IMR-90 (cell line): ENCODE measurements at regions of chr9 and their contacts with region 1.

Region 1: GRCh38 chr9:88224938-88225337 is 86.7 kb upstream of the SPATA31C2 start:
- DNase-seq: no peak
- ATAC-seq: no peak
- H3K4me3 ChIP-seq: no peak overlapping the region
- H3K27ac ChIP-seq: no peak overlapping the region
- H3K4me1 ChIP-seq: no peaks in the 10 kb centered on the region
- H3K27me3 ChIP-seq: no peaks in the 10 kb centered on the region; the same call in 1 of the 2 replicates
- CTCF ChIP-seq: no peak
- POLR2A ChIP-seq: no peak
- RAD21 ChIP-seq: no peak

Region 2: DNA sequence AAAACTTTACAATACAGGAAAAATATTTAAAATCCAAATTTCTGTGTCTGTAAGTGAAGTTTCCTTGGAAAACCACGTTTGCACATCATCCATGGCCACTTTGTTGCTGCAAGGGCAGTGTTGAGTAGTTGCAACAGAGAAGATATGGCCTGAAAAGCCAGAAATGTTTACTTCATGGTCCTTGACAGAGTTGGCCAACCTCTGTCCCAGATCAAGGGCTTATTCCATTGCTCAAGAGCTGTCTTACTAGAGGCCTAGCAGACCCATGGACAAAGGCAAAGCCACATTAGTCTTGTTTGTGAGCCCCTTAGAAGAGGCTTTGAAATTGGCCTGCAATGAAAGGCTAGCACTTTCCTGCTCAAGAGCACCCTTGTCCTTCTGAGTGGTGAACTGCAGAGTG is 1397.0 kb before region 1 on chr9:
- CTCF ChIA-PET with region 1: no interaction called
- POLR2A ChIA-PET with region 1: no interaction called
- dilution Hi-C with region 1: no loop called
- in situ Hi-C with region 1: no loop called
- intact Hi-C with region 1: loop called (anchors 5 kb)
- DNase-seq: no peak
- ATAC-seq: no peak
- H3K4me3 ChIP-seq: no peak overlapping the region
- H3K27ac ChIP-seq: no peak overlapping the region
- H3K4me1 ChIP-seq: peaks cover 4% of the 10 kb centered on the region; the same call in 1 of the 2 replicates
- H3K27me3 ChIP-seq: peaks cover 8% of the 10 kb centered on the region
- CTCF ChIP-seq: no peak
- POLR2A ChIP-seq: no peak
- RAD21 ChIP-seq: no peak

Region 3: GRCh38 chr9:88173378-88173999 is 51.4 kb before region 1 on chr9:
- CTCF ChIA-PET with region 1: no interaction called
- POLR2A ChIA-PET with region 1: no interaction called
- dilution Hi-C with region 1: no loop called
- in situ Hi-C with region 1: no loop called
- intact Hi-C with region 1: no loop called
- DNase-seq: peak; percentile 73
- ATAC-seq: peak; percentile 65; the same call in 1 of the 2 replicates
- H3K4me3 ChIP-seq: no peak overlapping the region
- H3K27ac ChIP-seq: no peak overlapping the region
- H3K4me1 ChIP-seq: no peaks in the 10 kb centered on the region
- H3K27me3 ChIP-seq: peaks cover 7% of the 10 kb centered on the region; the same call in 1 of the 2 replicates
- CTCF ChIP-seq: peak; percentile 99
- POLR2A ChIP-seq: no peak
- RAD21 ChIP-seq: peak; percentile 77